ENCODE measurements at regions of chr4 and their contacts with region 1.

Region 1: GRCh38 chr4:40887288-40888131 is 137.8 kb downstream of the NSUN7 start:
- DNase-seq: no peak
- H3K4me3 ChIP-seq: no peak overlapping the region
- H3K27ac ChIP-seq: no peak overlapping the region
- H3K4me1 ChIP-seq: peaks cover 0 to 25% (median 11%) of the 10 kb centered on the region in 4 donors
- H3K27me3 ChIP-seq: no peaks in the 10 kb centered on the region
- CTCF ChIP-seq: no peak

Region 2: DNA sequence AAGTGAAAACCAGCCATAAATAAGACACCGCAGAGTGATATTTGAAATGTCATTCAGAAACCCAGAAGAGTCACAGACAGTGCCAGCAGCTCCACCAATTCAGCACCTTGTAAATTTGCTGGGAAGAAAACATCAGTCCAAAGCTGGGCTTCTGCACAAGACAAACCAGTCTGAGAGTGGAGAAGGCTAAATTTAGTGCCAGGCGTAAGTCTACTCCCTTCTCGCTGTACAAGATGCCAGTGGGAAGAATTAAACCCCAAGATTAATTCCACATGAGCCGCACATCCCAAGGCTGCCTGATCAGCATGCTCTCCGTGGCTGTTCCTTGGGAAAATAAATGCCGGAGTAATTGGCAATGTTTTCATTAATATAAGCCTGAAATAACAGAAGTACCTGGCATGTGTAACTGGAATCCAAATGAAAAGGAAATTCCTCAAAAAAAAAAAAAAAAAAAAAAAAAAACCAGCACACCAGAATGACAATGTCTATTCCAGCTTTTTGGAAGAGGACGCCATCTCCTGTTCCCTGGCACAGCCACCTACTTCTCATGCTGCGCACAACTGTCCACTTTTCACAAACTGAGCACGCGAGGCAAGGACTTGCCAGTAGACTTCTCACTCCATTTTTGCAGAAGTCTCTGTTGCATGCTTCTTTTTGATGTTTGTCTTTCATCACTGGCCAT is 42.2 kb before region 1 on chr4:
- intact Hi-C with region 1: loop called (anchors 5 kb)
- DNase-seq: no peak
- H3K4me3 ChIP-seq: no peak overlapping the region
- H3K27ac ChIP-seq: peak overlapping the region; percentile 51 to 61
- H3K4me1 ChIP-seq: peaks cover 0 to 60% (median 24%) of the 10 kb centered on the region in 4 donors
- H3K27me3 ChIP-seq: no peaks in the 10 kb centered on the region
- CTCF ChIP-seq: no peak

Measured in tibial artery (tissue), 4 donors.